Heart left ventricle (tissue), 16 donors: ENCODE measurements at regions of chr2 and their contacts with region 1.

Region 1: DNA sequence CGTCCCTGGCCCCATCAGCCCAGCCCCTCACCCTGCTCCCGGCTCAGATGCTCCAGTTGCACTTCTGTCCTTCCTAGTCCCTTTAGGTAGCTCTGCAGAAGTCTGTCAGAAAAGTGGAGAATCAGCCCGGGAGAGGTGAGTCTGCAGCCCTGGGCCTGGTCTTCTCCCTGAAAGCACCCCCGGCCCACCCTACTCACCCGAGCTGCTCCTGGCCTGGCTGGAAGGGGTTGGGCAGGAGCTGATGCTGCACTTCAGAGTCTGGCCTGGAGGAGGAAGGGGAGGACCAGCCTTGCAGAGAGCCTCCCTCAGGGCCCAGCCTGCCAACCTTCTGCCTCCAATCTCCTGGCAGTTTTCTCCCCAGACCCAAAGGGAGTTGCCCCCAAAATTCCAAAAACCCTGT is 15.8 kb downstream of the KHK start:
- DNase-seq: no peak
- ATAC-seq: no peak
- H3K4me3 ChIP-seq: no peak overlapping the region
- H3K27ac ChIP-seq: no peak overlapping the region
- H3K4me1 ChIP-seq: peaks cover 0 to 2% (median 0%) of the 10 kb centered on the region in 12 donors
- H3K27me3 ChIP-seq: peaks cover 0 to 7% (median 0%) of the 10 kb centered on the region in 9 donors
- CTCF ChIP-seq: no peak
- POLR2A ChIP-seq: no peak

Region 2: GRCh38 chr2:27126252-27126710 is 24.0 kb after region 1 on chr2:
- intact Hi-C with region 1: loop called in 1 of 10 experiments (anchors 2 kb)
- DNase-seq: peak in 2 of 5 donors; percentile 36 to 37
- ATAC-seq: peak; percentile 53 to 78 (median 62)
- H3K4me3 ChIP-seq: no peak overlapping the region
- H3K27ac ChIP-seq: peak overlapping the region in 4 of 12 donors; percentile 49 to 74 (median 58)
- H3K4me1 ChIP-seq: peaks cover 0 to 15% (median 12%) of the 10 kb centered on the region in 12 donors
- H3K27me3 ChIP-seq: no peaks in the 10 kb centered on the region
- CTCF ChIP-seq: no peak
- POLR2A ChIP-seq: no peak

Region 3: DNA sequence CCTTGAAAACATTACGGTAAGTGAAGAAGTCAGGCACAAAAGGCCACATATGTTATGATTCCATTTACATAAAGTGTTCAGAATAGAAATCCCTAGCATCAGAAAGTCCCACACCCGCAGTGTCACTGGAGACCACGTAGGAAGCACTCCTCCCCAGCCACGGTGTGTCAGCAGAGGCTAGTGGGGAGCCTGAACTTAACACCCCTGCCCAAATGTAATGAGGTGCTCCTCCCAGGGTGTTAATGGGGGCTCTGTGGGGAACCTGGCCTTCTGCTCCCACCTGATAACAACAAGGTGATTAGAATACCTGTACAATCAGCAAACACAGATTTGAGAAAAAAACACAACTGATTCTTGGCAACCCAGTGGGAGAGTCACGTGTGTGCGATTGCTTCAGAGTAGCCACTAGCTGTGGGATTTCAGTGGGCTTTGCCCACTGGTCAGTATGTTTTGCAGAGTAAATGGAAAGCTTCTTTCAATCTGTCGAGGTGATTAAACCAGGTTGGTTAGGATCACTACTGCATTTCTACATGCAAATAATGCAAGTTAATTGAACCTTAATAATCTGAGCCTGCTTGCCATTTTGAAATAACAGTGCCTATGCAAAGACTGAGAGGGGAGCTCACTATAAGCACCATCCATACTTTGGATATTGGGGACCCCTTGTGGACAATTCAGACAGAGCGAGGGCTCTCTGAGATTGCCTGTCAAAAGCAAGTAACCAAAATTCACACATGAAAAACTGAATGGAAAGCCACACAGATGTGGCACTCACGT is 88.9 kb after region 1 on chr2:
- intact Hi-C with region 1: loop called (anchors 1 to 5 kb)
- DNase-seq: peak in 1 of 5 donors; percentile 29
- ATAC-seq: peak in 3 of 4 donors; percentile 65 to 76 (median 73)
- H3K4me3 ChIP-seq: no peak overlapping the region
- H3K27ac ChIP-seq: no peak overlapping the region
- H3K4me1 ChIP-seq: no peaks in the 10 kb centered on the region
- H3K27me3 ChIP-seq: no peaks in the 10 kb centered on the region
- CTCF ChIP-seq: peak; percentile 46 to 70 (median 56)
- POLR2A ChIP-seq: no peak

Region 4: GRCh38 chr2:27271631-27272340 is 169.5 kb after region 1 on chr2:
- intact Hi-C with region 1: loop called in 3 of 10 experiments (anchors 2 to 5 kb)
- DNase-seq: peak in 3 of 5 donors; percentile 64 to 69 (median 66)
- ATAC-seq: peak; percentile 87 to 95 (median 93)
- H3K4me3 ChIP-seq: no peak overlapping the region
- H3K27ac ChIP-seq: peak overlapping the region; percentile 62 to 91 (median 77)
- H3K4me1 ChIP-seq: peaks cover 0 to 38% (median 5%) of the 10 kb centered on the region in 12 donors
- H3K27me3 ChIP-seq: peaks cover 0 to 11% (median 0%) of the 10 kb centered on the region in 9 donors
- CTCF ChIP-seq: no peak
- POLR2A ChIP-seq: peak in 1 of 2 donors; percentile 32

Region 5: GRCh38 chr2:27303093-27304025 is 201.0 kb after region 1 on chr2:
- intact Hi-C with region 1: loop called in 3 of 10 experiments (anchors 1 to 10 kb)
- DNase-seq: peak in 3 of 5 donors; percentile 51 to 68 (median 63)
- ATAC-seq: peak; percentile 45 to 73 (median 60)
- H3K4me3 ChIP-seq: peak overlapping the region in 11 of 12 donors; percentile 4 to 52 (median 36)
- H3K27ac ChIP-seq: peak overlapping the region in 9 of 12 donors; percentile 27 to 66 (median 43)
- H3K4me1 ChIP-seq: peaks cover 0 to 30% (median 14%) of the 10 kb centered on the region in 12 donors
- H3K27me3 ChIP-seq: peaks cover 0 to 39% (median 23%) of the 10 kb centered on the region in 9 donors
- CTCF ChIP-seq: peak; percentile 75 to 92 (median 89)
- POLR2A ChIP-seq: no peak